ENCODE measurements at regions of chr5 and their contacts with region 1.

Region 1: DNA sequence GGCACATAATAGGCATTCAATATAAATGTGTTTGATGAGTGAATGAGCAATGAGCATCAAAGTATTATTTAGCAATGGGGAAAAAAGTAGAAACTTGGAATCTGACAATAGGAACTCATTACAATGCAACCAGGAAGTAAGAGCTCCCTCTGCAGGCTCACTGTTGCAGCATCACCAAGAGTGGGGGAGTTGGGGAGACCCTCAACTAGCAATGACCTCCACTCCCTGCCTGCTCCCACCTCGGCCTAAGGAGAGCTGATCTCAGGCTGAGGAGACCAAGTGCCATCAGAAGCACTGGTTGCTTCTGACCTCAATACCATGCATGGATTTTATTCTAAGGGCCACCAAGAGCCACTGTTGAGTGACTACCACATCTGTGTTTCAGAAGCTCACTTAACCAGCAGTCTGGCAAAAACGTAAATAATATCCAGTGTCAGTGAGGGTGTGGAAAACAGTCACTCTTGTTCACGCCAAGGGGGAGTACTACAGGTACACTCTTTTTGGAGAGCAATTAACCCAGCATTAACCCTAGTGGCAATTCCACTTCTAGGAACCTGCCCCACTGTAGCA is 8.0 kb downstream of the VDAC1 start:
- DNase-seq: no peak
- H3K4me3 Mint-ChIP-seq: no peak overlapping the region
- H3K27ac Mint-ChIP-seq: no peak overlapping the region
- H3K4me1 Mint-ChIP-seq: peaks cover 48% of the 10 kb centered on the region
- H3K27me3 Mint-ChIP-seq: no peaks in the 10 kb centered on the region

Region 2: DNA sequence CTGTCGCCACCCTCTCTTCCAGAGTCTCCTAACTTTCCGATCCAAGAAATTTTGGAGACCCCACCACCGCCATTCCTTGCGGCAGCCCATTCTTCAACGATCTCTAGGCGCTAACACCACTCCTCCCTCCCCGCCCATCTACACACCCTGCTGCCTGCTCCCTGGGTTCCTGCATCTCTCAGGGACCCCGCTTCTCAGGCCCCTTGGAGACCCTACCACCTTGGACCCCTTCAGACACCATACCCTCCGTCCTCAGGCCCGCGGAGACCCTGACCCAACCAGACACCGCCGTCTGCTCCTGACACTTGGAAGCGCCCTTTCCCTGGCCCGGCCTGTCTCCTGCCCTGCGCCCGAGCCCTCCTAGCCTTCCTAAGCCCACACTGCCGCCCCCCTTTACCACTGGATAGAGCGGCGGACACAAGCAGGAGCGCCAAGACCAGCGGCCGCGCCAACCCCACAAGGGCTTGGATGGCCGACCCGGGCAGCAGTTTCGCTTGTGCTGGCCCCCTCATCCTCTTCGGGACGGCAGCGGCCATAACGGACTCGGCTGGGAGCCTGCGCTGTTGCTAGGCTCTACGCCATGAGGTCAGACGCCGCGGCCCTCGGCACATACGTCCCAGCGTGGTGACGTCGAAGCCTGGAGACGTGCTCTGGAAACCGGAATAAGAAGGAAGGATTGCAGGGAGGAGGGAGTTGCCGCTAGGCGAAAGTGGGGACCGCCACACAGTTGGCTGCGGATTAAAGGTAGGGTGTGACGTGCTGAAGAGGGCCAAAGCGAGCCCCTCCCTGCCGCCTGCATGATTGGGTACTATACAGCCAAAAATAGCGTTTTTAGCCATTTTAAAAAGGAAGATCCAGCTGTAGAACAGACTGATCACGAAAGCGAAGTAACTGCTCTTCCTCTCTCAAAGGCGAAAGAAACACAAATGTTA is 28.5 kb before region 1 on chr5 and contains the start of gene C5orf15:
- CTCF ChIA-PET with region 1: interaction called, 11 read pairs
- POLR2A ChIA-PET with region 1: interaction called, 4 read pairs
- DNase-seq: peak; percentile 95
- H3K4me3 Mint-ChIP-seq: peak within 1 kb of the TSS; percentile 96
- H3K27ac Mint-ChIP-seq: peak within 1 kb of the TSS; percentile 85
- H3K4me1 Mint-ChIP-seq: peaks cover 55% of the 10 kb centered on the region
- H3K27me3 Mint-ChIP-seq: no peaks in the 10 kb centered on the region
- total RNA-seq, gene C5orf15: 24.4 to 27.7 TPM

Region 3: GRCh38 chr5:133977161-133977787 is 19.5 kb before region 1 on chr5:
- CTCF ChIA-PET with region 1: interaction called, 54 read pairs
- POLR2A ChIA-PET with region 1: interaction called, 5 read pairs
- DNase-seq: no peak
- H3K4me3 Mint-ChIP-seq: no peak overlapping the region
- H3K27ac Mint-ChIP-seq: peak overlapping the region; percentile 23
- H3K4me1 Mint-ChIP-seq: peaks cover 22% of the 10 kb centered on the region
- H3K27me3 Mint-ChIP-seq: no peaks in the 10 kb centered on the region

Region 4: DNA sequence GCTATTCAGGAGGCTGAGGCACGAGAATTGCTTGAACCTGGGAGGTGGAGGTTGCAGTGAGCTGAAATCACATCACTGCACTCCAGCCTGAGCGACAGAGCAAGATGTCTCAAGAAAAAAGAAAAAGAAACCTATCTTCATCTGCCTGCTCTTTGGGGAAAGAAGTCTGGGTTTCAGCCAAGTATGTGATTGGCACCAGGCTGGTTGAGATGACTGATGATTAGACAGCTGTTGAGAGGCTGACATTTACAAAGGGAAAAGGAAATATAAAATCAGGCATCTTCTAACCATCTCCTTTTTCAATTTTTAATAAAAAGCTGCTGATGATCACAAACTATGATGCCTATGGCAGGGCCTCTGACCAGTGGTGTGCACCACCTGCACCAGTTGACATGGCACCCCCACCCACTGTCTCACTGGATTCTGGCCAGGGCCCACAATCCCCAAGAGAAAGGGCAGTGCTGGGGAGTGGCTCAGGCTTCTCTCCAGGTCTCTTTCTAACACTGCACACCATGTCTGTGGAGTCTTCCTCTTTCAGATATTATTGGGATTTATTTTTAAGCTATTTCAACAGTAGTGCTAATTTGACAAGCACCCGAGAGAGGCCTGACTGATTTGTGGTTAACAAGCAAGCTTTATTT is 11.1 kb before region 1 on chr5:
- CTCF ChIA-PET with region 1: interaction called, 54 read pairs
- POLR2A ChIA-PET with region 1: interaction called, 5 read pairs
- DNase-seq: no peak
- H3K4me3 Mint-ChIP-seq: no peak overlapping the region
- H3K27ac Mint-ChIP-seq: no peak overlapping the region
- H3K4me1 Mint-ChIP-seq: peaks cover 12% of the 10 kb centered on the region
- H3K27me3 Mint-ChIP-seq: no peaks in the 10 kb centered on the region

Region 5: GRCh38 chr5:134046801-134047686 is 50.3 kb after region 1 on chr5:
- CTCF ChIA-PET with region 1: no interaction called
- POLR2A ChIA-PET with region 1: no interaction called
- DNase-seq: no peak
- H3K4me3 Mint-ChIP-seq: no peak overlapping the region
- H3K27ac Mint-ChIP-seq: no peak overlapping the region
- H3K4me1 Mint-ChIP-seq: no peaks in the 10 kb centered on the region
- H3K27me3 Mint-ChIP-seq: peaks cover 7% of the 10 kb centered on the region